HepG2 (cell line): ENCODE measurements at regions of chr3 and their contacts with region 1.

Region 1: GRCh38 chr3:42961633-42962032 is 17.5 kb upstream of the GASK1A start:
- DNase-seq: peak; percentile 42
- ATAC-seq: peak; percentile 58
- H3K4me3 ChIP-seq: no peak overlapping the region
- H3K27ac ChIP-seq: no peak overlapping the region
- H3K4me1 ChIP-seq: no peaks in the 10 kb centered on the region
- H3K27me3 ChIP-seq: no peaks in the 10 kb centered on the region
- CTCF ChIP-seq: peak; percentile 74
- EP300 ChIP-seq: no peak
- POLR2A ChIP-seq: no peak
- RAD21 ChIP-seq: peak; percentile 43; the same call in 1 of the 2 replicates

Region 2: GRCh38 chr3:42701142-42702065 is 260.2 kb before region 1 on chr3:
- CTCF ChIA-PET with region 1: no interaction called
- POLR2A ChIA-PET with region 1: no interaction called
- in situ Hi-C with region 1: no loop called
- intact Hi-C with region 1: no loop called
- DNase-seq: peak; percentile 27
- ATAC-seq: peak; percentile 84
- H3K4me3 ChIP-seq: no peak overlapping the region
- H3K27ac ChIP-seq: no peak overlapping the region
- H3K4me1 ChIP-seq: no peaks in the 10 kb centered on the region
- H3K27me3 ChIP-seq: peaks cover 3 to 8% of the 10 kb centered on the region in 2 experiments; a peak in 2 of 5 replicates
- CTCF ChIP-seq: no peak
- EP300 ChIP-seq: no peak
- POLR2A ChIP-seq: no peak
- RAD21 ChIP-seq: no peak

Region 3: DNA sequence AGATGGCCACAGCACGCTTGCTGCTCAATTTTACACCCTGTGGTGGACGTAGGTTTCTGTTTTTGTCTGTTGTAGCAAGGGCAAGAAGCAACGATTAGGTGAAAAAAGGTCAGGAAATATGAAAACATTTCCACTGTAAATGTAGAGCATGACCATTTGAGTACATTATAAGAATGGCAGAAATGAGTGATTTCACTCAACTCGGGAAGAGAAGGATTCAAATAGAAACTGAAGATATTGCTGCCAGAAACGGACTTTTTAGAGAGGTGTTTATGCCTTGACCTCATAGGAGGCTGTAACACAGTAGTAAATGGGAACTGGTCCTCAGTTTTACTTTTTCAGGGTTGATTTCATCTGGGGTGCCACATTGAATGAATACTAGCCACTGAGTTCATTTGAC is 15.6 kb before region 1 on chr3:
- CTCF ChIA-PET with region 1: no interaction called
- POLR2A ChIA-PET with region 1: no interaction called
- in situ Hi-C with region 1: no loop called
- intact Hi-C with region 1: no loop called
- DNase-seq: no peak
- ATAC-seq: no peak
- H3K4me3 ChIP-seq: no peak overlapping the region
- H3K27ac ChIP-seq: no peak overlapping the region
- H3K4me1 ChIP-seq: no peaks in the 10 kb centered on the region
- H3K27me3 ChIP-seq: peaks cover 0 to 4% of the 10 kb centered on the region in 2 experiments; a peak in 1 of 5 replicates
- CTCF ChIP-seq: no peak
- EP300 ChIP-seq: no peak
- POLR2A ChIP-seq: no peak
- RAD21 ChIP-seq: no peak

Region 4: GRCh38 chr3:43071313-43071893 is 109.8 kb after region 1 on chr3:
- CTCF ChIA-PET with region 1: interaction called, 8 read pairs
- POLR2A ChIA-PET with region 1: no interaction called
- in situ Hi-C with region 1: loop called (anchors 10 kb)
- intact Hi-C with region 1: loop called (anchors 2 kb)
- DNase-seq: peak; percentile 23
- ATAC-seq: peak; percentile 76
- H3K4me3 ChIP-seq: no peak overlapping the region
- H3K27ac ChIP-seq: no peak overlapping the region
- H3K4me1 ChIP-seq: no peaks in the 10 kb centered on the region
- H3K27me3 ChIP-seq: no peaks in the 10 kb centered on the region
- CTCF ChIP-seq: peak; percentile 63
- EP300 ChIP-seq: no peak
- POLR2A ChIP-seq: no peak
- RAD21 ChIP-seq: no peak

Region 5: GRCh38 chr3:43155464-43156121 is 194.0 kb after region 1 on chr3:
- CTCF ChIA-PET with region 1: interaction called, 11 read pairs
- POLR2A ChIA-PET with region 1: no interaction called
- in situ Hi-C with region 1: loop called (anchors 5 kb)
- intact Hi-C with region 1: loop called (anchors 1 kb)
- DNase-seq: peak; percentile 51
- ATAC-seq: peak; percentile 93
- H3K4me3 ChIP-seq: no peak overlapping the region
- H3K27ac ChIP-seq: no peak overlapping the region
- H3K4me1 ChIP-seq: no peaks in the 10 kb centered on the region
- H3K27me3 ChIP-seq: peaks cover 0 to 37% of the 10 kb centered on the region in 2 experiments; a peak in 3 of 5 replicates
- CTCF ChIP-seq: peak; percentile 83
- EP300 ChIP-seq: no peak
- POLR2A ChIP-seq: no peak
- RAD21 ChIP-seq: peak; percentile 58; the same call in 1 of the 2 replicates

Region 6: GRCh38 chr3:43378066-43378935 is 416.7 kb after region 1 on chr3:
- CTCF ChIA-PET with region 1: no interaction called
- POLR2A ChIA-PET with region 1: no interaction called
- in situ Hi-C with region 1: no loop called
- intact Hi-C with region 1: loop called (anchors 2 kb)
- DNase-seq: peak; percentile 31
- ATAC-seq: peak; percentile 84
- H3K4me3 ChIP-seq: no peak overlapping the region
- H3K27ac ChIP-seq: no peak overlapping the region
- H3K4me1 ChIP-seq: no peaks in the 10 kb centered on the region; the same call in 1 of the 2 replicates
- H3K27me3 ChIP-seq: no peaks in the 10 kb centered on the region
- CTCF ChIP-seq: peak; percentile 80
- EP300 ChIP-seq: no peak
- POLR2A ChIP-seq: no peak
- RAD21 ChIP-seq: peak; percentile 68

Region 7: DNA sequence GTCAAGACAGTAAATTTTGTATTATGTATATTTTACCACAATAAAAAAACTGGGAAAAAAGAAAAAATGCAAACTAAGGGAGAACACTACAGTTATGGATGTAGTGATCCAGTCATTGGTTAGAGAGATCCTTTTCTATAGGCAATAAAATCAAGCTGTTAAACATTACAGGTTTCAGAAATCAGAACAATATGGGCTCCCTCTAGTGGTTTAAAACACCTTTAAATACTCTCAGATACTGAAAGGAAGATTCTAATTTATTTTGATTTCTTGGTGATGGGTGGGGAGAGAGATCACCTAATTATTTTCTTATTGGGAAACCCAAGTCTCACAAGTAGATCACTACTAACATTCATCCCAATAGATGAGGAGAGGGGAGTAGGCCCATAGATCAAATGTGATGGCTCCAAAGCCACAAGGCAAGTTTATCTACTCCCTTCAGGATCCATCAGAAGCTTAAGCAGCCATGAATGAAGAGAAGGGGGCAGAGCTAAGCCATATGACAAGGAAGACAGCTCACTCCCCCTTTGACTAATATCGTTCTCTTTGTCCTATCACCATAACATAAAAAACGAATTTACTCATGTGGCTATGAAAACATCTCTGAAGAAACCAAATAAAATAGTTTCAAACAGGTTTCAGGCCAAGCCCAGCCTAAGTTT is 541.6 kb after region 1 on chr3:
- CTCF ChIA-PET with region 1: interaction called, 6 read pairs
- POLR2A ChIA-PET with region 1: no interaction called
- in situ Hi-C with region 1: loop called (anchors 25 kb)
- intact Hi-C with region 1: no loop called
- DNase-seq: peak; percentile 15
- ATAC-seq: no peak; the same call in 2 of the 3 replicates
- H3K4me3 ChIP-seq: no peak overlapping the region
- H3K27ac ChIP-seq: no peak overlapping the region
- H3K4me1 ChIP-seq: no peaks in the 10 kb centered on the region
- H3K27me3 ChIP-seq: no peaks in the 10 kb centered on the region; a peak in 1 of 5 replicates
- CTCF ChIP-seq: peak; percentile 43
- EP300 ChIP-seq: no peak
- POLR2A ChIP-seq: no peak
- RAD21 ChIP-seq: no peak

Region 8: GRCh38 chr3:44522494-44522933 is 1560.9 kb after region 1 on chr3:
- CTCF ChIA-PET with region 1: no interaction called
- POLR2A ChIA-PET with region 1: no interaction called
- in situ Hi-C with region 1: no loop called
- intact Hi-C with region 1: no loop called
- DNase-seq: peak; percentile 67
- ATAC-seq: peak; percentile 59
- H3K4me3 ChIP-seq: peak overlapping the region in 1 of 3 experiments; percentile 47; a peak in 2 of 6 replicates
- H3K27ac ChIP-seq: no peak overlapping the region
- H3K4me1 ChIP-seq: peaks cover 42% of the 10 kb centered on the region
- H3K27me3 ChIP-seq: no peaks in the 10 kb centered on the region; a peak in 2 of 5 replicates
- CTCF ChIP-seq: peak; percentile 21; the same call in 1 of the 2 replicates
- EP300 ChIP-seq: peak in 1 of 2 experiments; percentile 60; a peak in 1 of 4 replicates
- POLR2A ChIP-seq: no peak
- RAD21 ChIP-seq: no peak